MCF 10A (cell line): ENCODE measurements at regions of chr1 and their contacts with region 1.

Region 1: GRCh38 chr1:7218210-7218832 is 433.1 kb downstream of the CAMTA1 start:
- DNase-seq: peak; percentile 57
- H3K4me3 Mint-ChIP-seq: no peak overlapping the region
- H3K27ac Mint-ChIP-seq: no peak overlapping the region
- H3K4me1 Mint-ChIP-seq: peaks cover 4% of the 10 kb centered on the region
- H3K27me3 Mint-ChIP-seq: peaks cover 22% of the 10 kb centered on the region
- CTCF ChIP-seq: peak; percentile 87

Region 2: GRCh38 chr1:6794164-6794563 is 424.2 kb before region 1 on chr1:
- CTCF ChIA-PET with region 1: interaction called, 8 read pairs
- POLR2A ChIA-PET with region 1: no interaction called
- intact Hi-C with region 1: loop called (anchors 1 kb)
- DNase-seq: peak; percentile 42
- H3K4me3 Mint-ChIP-seq: no peak overlapping the region
- H3K27ac Mint-ChIP-seq: no peak overlapping the region
- H3K4me1 Mint-ChIP-seq: peaks cover 20% of the 10 kb centered on the region
- H3K27me3 Mint-ChIP-seq: no peaks in the 10 kb centered on the region
- CTCF ChIP-seq: peak; percentile 55

Region 3: DNA sequence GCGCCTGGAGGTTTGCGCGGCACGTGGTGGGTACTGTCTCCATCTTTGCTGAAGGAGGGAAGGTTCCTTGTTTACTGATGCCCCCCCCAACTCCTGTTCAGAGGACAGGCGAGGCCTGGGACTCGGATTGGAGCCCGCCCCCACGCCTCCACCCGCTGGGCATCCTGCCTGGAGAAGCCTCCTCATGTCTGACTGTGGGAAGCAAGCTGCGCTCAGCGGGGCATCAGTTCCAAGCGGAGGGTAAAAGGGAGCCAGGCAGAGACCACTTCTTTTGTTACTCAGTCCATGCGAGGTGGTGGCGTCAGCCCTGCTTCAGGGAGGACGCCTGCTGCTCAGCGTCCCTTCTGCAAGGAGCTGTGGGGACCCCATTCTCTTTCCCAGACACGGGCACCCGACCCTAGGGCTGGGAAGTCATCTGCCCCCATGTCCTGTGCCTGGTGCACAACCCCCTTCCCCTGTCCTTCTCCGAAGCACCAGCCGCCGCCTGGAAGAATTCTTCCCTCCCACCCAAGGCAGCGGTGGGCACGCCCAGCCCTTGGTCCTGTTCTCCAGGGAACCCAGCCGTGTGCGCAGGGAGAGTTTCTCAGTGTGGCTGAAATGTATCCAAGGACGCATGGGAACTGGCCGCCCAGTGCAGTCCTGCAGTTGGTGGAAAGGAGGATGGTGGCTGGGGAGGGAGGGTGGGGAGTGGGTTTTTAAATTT is 19.1 kb before region 1 on chr1:
- CTCF ChIA-PET with region 1: no interaction called
- POLR2A ChIA-PET with region 1: no interaction called
- intact Hi-C with region 1: no loop called
- DNase-seq: no peak
- H3K4me3 Mint-ChIP-seq: no peak overlapping the region
- H3K27ac Mint-ChIP-seq: no peak overlapping the region
- H3K4me1 Mint-ChIP-seq: no peaks in the 10 kb centered on the region
- H3K27me3 Mint-ChIP-seq: peaks cover 58% of the 10 kb centered on the region
- CTCF ChIP-seq: no peak